ENCODE measurements at regions of chr1 and their contacts with region 1.

Region 1: GRCh38 chr1:163195728-163196448 is 6.8 kb downstream of the RGS5 start:
- DNase-seq: no peak
- ATAC-seq: no peak
- H3K4me3 ChIP-seq: peak overlapping the region; percentile 18 to 42
- H3K27ac ChIP-seq: peak overlapping the region; percentile 51 to 82
- H3K4me1 ChIP-seq: peaks cover 2% of the 10 kb centered on the region in 2 donors
- H3K27me3 ChIP-seq: no peaks in the 10 kb centered on the region

Region 2: GRCh38 chr1:163231385-163231784 is 35.5 kb after region 1 on chr1:
- intact Hi-C with region 1: loop called in 1 of 2 experiments (anchors 5 kb)
- DNase-seq: no peak
- ATAC-seq: peak; percentile 88
- H3K4me3 ChIP-seq: no peak overlapping the region
- H3K27ac ChIP-seq: peak overlapping the region; percentile 21 to 92
- H3K4me1 ChIP-seq: peaks cover 1 to 3% of the 10 kb centered on the region in 2 donors
- H3K27me3 ChIP-seq: no peaks in the 10 kb centered on the region

Region 3: DNA sequence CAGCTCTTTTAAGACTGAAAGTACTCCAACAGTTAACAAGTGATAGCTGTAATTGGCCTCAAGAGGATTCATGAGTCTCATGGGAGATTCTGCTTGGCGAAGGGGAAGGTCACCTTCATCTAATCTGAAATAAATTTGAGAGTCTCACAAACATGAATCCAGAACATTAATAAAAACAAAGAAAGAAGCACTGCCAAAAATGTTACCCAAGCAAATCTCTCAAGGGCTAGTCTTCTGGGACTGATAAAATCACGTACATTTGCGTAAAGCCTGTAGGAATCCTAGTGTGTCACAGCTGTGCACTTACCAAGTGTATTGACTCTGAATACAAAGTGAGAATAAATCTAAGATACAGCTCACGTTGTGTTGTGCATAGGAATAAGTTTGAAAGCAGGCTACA is 104.7 kb after region 1 on chr1:
- intact Hi-C with region 1: loop called in 1 of 2 experiments (anchors 5 kb)
- DNase-seq: no peak
- ATAC-seq: no peak
- H3K4me3 ChIP-seq: no peak overlapping the region
- H3K27ac ChIP-seq: no peak overlapping the region
- H3K4me1 ChIP-seq: peaks cover 0 to 1% of the 10 kb centered on the region in 2 donors
- H3K27me3 ChIP-seq: no peaks in the 10 kb centered on the region

Measured in aorta (tissue), 5 donors.